Left cardiac atrium (tissue), 4 donors: ENCODE measurements at regions of chr9 and their contacts with region 1.

Region 1: GRCh38 chr9:5510360-5510931 is at the start of gene PDCD1LG2:
- DNase-seq: no peak
- ATAC-seq: peak; percentile 46 to 69
- total RNA-seq, gene PDCD1LG2: 3.3 to 3.6 TPM

Region 2: DNA sequence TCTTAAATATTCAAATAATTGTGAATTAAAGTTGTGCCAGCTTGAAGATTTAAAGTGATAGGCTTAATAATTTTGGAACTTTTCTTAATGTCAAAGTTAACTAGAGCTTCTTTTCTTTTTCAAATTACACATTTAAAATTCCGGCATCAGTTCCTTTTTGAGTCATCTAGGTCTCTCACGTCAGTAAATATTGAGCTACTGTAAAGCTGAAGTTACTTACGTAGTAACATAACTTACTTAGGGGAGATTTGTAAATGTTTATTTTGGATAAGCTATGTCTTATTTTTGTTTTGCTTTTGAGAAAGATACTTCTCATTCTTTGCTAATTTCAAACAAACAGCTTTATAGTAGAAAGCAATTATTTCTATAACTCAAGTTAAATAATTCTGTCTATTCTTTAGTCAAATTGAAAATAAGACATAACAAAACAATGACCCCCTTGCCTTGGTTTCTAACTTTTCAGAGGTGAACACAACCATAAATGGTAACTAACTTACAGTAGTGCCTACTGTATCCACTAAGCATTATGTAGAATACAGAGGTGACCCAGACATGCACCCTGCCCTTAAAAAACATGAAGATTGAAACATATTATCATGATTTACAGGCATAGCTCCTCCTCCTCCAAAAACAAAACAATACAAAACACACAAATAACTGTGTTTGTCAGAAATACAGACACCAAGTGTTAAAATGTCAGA is 30.3 kb before region 1 on chr9:
- intact Hi-C with region 1: no loop called
- DNase-seq: no peak
- ATAC-seq: no peak

Region 3: DNA sequence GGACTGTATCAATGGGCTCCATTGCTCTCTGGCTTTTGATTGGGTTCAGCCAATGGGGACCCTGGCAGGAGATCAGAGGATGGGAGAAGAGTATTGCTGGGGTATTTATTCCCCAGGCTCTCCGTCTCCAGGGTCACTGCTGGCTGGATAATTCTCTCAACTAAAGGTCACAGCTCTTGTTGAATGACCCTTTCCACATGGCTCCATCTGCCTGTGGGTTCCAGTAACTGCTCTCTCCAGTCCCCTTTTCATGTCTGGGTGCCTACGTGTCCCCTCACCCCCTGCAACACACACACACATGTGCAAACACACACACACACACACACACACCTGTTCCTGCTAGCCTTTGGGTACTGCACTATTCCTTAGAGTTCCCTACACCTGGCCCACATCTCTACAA is 64.6 kb after region 1 on chr9:
- intact Hi-C with region 1: loop called in 1 of 2 experiments (anchors 5 kb)
- DNase-seq: no peak
- ATAC-seq: no peak